ENCODE measurements at regions of chr11 and their contacts with region 1.

Region 1: DNA sequence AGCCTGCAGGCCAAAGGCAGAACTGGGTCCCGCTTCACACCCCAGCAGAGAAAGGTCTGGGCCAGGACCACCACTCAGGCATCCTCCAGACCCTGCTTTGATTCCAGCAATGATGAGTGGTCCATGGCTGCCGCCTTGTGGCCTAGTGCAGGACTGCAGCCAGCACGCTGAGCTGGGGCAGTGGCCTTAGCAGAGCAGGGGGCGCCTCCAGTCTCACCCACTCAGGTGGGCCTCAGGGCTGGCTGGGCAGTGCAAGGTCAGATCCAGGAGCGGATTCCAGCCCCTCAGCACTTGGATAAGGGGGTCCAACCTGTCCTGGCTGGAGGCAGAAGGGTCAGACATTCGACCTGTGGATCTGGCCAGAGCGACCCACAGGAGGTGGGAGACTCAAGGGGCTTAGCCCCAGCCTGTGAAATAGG is 9.6 kb upstream of the PDE2A start:
- DNase-seq: no peak
- H3K4me3 ChIP-seq: no peak overlapping the region
- H3K27ac ChIP-seq: peak overlapping the region in 2 of 4 donors; percentile 34 to 68
- H3K4me1 ChIP-seq: peaks cover 0 to 37% (median 8%) of the 10 kb centered on the region in 4 donors
- H3K27me3 ChIP-seq: peaks cover 0 to 20% (median 8%) of the 10 kb centered on the region in 3 donors
- CTCF ChIP-seq: peak; percentile 88 to 99 (median 94)
- EP300 ChIP-seq: no peak
- POLR2A ChIP-seq: no peak

Region 2: DNA sequence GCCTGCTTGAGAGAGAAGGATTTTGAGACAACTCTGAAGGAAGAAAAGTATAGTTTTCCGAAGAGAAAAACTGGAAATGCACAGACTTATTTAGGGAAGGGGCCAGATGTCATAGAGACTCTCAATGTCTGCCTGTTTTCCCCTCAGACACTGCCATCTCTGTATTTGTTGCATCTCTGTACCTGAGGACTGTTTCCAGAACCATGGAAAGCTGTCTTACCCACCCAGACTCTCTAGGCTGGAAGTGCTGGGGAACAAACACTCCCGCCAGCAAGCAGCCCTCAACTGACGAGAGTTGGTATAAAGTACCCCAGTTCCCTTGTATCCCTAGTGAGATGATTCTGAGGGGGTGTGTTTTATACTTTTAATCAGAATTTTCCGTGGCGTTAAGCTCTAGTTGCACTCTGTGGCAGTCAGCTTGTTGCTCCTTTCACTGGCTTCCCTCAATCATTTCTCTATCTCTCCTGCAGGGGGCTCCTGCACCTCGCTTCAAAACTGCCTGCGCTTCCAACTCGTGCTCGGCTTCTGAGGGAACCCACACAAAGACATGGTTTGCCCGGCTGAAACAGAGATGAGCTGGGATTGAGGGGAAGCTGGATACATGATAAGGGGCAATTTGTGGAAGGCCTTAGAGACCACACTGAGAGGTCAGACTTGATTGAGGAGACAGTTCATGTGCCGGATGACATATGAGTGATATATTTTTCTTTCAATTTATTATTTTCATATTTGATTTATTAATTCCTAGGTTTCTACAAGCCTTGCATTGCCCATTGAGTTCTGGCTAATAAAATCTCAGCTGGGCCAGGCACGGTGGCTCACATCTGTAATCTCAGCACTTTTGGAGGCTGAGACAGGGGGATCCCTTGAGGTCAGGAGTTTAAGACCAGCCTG is 212.5 kb before region 1 on chr11:
- intact Hi-C with region 1: loop called (anchors 1 kb)
- DNase-seq: peak; percentile 83
- H3K4me3 ChIP-seq: no peak overlapping the region
- H3K27ac ChIP-seq: no peak overlapping the region
- H3K4me1 ChIP-seq: peaks cover 0 to 7% (median 3%) of the 10 kb centered on the region in 4 donors
- H3K27me3 ChIP-seq: peaks cover 0 to 12% (median 5%) of the 10 kb centered on the region in 3 donors
- CTCF ChIP-seq: peak; percentile 53 to 75 (median 73)
- EP300 ChIP-seq: no peak
- POLR2A ChIP-seq: no peak

Region 3: DNA sequence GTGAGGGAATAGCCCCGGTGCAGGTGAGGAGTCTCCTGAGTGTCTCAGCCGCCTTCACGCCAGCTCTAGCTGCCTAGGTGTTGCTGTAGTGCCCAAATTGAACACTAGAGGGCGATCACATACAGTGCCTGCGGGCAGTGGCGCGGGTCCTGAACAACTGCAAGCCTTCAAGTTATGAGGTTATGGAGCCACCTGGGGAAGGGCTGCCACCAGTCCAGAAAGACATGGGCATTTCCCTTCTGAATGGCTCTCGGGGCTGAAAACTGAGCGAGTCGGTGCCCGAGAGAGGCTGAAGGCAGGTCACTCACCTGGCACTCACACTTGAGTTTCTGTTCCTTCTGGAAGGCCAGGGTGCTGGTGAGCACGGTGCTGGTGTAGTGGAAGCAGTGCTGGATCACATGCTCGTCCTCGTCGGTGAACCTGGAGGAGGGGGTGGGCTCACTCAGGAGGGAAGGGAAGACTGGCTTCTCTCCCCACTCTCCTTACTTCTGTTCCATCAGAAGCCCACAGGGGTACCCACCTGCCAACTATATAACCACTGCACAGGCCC is 98.0 kb before region 1 on chr11:
- intact Hi-C with region 1: loop called (anchors 1 kb)
- DNase-seq: peak; percentile 85
- H3K4me3 ChIP-seq: no peak overlapping the region
- H3K27ac ChIP-seq: no peak overlapping the region
- H3K4me1 ChIP-seq: peaks cover 0 to 17% (median 8%) of the 10 kb centered on the region in 4 donors
- H3K27me3 ChIP-seq: no peaks in the 10 kb centered on the region
- CTCF ChIP-seq: peak; percentile 87 to 94 (median 90)
- EP300 ChIP-seq: no peak
- POLR2A ChIP-seq: no peak